Activated naive CD4-positive, alpha-beta T cell treated with anti-CD3 and anti-CD28 coated beads for 36 hours (primary cell): ENCODE measurements at regions of chr3 and their contacts with region 1.

Region 1: DNA sequence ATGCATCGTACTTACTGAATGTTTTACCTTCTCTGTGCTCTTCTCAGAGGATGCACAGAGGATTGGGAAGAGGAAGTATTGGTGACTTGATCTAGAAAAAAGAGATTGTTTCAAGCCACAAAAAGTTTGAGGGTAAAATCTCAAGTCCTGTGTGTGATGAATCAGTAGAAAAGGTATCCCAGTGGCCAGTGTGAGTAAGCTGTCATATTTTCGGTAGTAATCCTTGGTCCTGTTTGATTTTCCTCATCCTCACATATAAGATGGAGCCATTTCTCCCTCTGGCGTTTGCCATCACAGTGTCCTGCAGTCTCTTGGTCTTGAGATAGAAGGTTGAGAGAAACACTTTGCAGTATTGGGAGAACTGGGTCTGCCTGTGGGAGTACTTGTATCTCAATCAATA is 166.8 kb downstream of the LPP start:
- DNase-seq: no peak
- H3K4me3 Mint-ChIP-seq: no peak overlapping the region
- H3K27ac Mint-ChIP-seq: no peak overlapping the region
- H3K4me1 Mint-ChIP-seq: peaks cover 49% of the 10 kb centered on the region
- H3K27me3 Mint-ChIP-seq: no peaks in the 10 kb centered on the region

Region 2: DNA sequence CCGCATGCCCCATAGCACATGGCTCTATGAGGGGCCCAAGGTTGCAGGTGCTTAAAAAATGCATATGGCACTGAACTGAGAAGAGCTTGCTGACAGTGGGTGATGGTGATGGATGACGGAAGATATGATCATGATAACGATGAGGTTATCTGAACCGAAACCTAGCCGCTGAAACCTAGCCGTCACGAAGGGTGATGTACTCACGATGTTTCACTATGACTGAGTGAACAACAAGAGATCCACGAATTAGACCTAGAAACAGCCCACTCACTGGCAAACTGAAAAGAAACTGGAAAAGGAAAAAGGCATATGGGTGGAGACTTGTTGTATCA is 517.9 kb before region 1 on chr3:
- CTCF ChIA-PET with region 1: no interaction called
- intact Hi-C with region 1: loop called (anchors 5 kb)
- DNase-seq: peak; percentile 89
- H3K4me3 Mint-ChIP-seq: peak overlapping the region; percentile 1
- H3K27ac Mint-ChIP-seq: peak overlapping the region; percentile 79
- H3K4me1 Mint-ChIP-seq: peaks cover 95% of the 10 kb centered on the region
- H3K27me3 Mint-ChIP-seq: no peaks in the 10 kb centered on the region

Region 3: DNA sequence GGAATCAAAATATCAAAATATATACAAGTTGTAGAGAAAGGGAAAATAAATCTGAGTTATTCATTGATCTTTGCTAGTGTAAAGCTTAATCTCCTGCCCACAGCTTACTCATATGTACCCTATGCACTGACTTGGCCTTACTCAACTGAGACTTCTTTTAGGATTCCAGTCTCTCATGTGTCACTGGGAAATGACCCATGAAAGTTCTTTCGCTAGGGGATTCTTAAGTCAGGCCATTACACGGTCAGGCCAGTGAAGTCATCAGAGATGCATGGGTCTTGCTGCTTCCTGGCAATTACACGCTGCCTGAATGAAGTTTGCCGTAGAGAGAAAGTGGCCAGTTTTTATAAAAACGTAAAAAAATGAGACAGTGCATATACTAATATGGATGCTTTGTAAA is 187.5 kb before region 1 on chr3:
- CTCF ChIA-PET with region 1: no interaction called
- intact Hi-C with region 1: no loop called
- DNase-seq: no peak
- H3K4me3 Mint-ChIP-seq: no peak overlapping the region
- H3K27ac Mint-ChIP-seq: no peak overlapping the region
- H3K4me1 Mint-ChIP-seq: peaks cover 11% of the 10 kb centered on the region
- H3K27me3 Mint-ChIP-seq: no peaks in the 10 kb centered on the region

Region 4: DNA sequence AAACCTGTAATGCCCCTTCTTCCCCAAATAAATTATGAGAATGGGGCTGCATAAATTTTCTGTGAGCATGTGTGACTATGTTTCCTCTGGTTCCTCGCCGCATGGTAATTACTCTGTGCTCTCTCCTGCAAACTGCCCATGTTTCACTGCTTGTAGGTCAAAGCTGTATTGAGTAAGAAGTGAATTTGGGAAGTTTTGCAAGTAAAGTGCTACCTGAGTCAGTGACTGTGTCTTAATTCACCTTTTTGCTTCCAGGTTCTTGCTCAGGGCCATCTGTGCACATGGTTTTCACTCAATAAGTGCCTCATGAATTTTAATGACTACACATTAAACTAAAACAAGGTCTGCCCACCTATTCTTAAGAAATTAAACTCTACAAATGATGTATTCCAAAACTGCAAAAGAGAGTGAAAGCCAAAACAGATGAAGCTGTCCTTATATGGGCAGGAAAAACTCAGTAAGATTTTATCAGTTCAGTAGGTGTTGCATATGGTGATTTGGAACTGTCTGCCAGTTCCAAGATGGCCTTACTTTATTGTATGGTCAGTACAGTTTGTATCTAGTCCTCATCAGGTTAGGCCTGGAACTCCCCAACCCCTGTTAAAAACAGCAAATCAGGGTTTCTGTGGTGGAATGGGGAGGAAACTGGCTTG is 66.8 kb before region 1 on chr3:
- CTCF ChIA-PET with region 1: no interaction called
- intact Hi-C with region 1: loop called (anchors 2 kb)
- DNase-seq: peak; percentile 54
- H3K4me3 Mint-ChIP-seq: no peak overlapping the region
- H3K27ac Mint-ChIP-seq: peak overlapping the region; percentile 76
- H3K4me1 Mint-ChIP-seq: peaks cover 44% of the 10 kb centered on the region
- H3K27me3 Mint-ChIP-seq: no peaks in the 10 kb centered on the region

Region 5: DNA sequence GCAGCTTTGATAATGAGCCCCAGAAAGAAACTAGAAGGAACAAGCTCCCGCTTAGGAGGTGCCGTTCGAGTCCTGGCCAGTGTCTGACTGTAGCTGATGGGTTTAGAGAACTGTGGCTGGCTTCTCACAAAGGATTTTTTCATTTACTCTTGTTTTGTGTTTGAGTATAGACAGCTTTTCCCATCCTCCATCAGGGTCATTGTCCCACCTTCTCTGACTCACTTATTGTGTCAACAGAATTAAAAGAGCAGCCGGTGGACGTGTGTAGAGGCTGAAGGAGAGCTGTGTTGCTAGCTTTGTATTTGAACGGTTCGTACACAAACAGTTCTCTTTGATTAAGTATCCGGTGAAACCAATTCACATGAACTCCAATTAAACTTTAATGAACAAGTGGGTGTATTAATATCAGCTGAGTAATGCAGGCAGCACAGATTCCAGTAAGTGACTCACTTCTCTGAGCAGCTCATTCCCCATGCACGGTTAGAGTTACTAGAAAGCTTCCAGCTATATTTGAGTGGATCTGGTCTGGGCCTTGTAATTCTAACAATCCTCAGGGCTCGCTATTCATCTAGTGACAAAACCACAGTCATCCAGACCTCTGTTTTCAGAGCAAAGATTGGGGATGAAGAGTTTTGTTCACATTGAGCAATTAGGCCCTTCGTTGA is 25.8 kb before region 1 on chr3:
- CTCF ChIA-PET with region 1: interaction called, 4 read pairs
- intact Hi-C with region 1: loop called (anchors 1 kb)
- DNase-seq: peak; percentile 49
- H3K4me3 Mint-ChIP-seq: no peak overlapping the region
- H3K27ac Mint-ChIP-seq: peak overlapping the region; percentile 69
- H3K4me1 Mint-ChIP-seq: peaks cover 85% of the 10 kb centered on the region
- H3K27me3 Mint-ChIP-seq: no peaks in the 10 kb centered on the region

Region 6: DNA sequence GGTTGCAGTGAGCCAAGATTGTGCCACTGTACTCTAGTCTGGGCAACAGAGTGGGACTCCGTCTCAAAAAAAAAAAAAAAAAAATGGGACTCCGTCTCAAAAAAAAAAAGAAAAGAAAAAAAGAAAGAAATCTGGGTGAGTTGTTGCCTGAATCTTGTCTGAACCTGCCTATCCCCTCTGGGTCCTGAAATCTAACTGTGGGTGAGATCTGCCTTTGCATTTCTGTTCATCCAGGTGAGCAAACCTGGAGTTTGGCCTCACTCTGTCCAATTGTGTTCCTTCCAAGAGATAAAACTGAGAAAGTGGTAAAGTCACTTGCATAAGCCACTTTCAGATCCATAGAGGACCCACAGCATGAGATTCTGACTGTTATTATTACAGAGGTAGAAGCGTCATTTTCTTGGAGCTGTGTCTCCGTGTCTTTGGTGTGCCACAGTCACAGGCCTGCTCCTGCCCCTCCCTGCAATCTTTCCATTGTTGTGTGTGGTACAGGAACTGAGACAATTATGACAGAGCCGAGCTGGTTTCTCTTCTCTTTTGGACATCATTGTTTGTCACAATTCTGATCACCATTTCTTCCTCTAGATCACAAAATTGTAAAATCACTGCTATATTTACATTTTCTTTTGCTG is 69.1 kb after region 1 on chr3:
- CTCF ChIA-PET with region 1: no interaction called
- intact Hi-C with region 1: loop called (anchors 1 kb)
- DNase-seq: peak; percentile 85
- H3K4me3 Mint-ChIP-seq: no peak overlapping the region
- H3K27ac Mint-ChIP-seq: peak overlapping the region; percentile 67
- H3K4me1 Mint-ChIP-seq: peaks cover 39% of the 10 kb centered on the region
- H3K27me3 Mint-ChIP-seq: no peaks in the 10 kb centered on the region

Region 7: DNA sequence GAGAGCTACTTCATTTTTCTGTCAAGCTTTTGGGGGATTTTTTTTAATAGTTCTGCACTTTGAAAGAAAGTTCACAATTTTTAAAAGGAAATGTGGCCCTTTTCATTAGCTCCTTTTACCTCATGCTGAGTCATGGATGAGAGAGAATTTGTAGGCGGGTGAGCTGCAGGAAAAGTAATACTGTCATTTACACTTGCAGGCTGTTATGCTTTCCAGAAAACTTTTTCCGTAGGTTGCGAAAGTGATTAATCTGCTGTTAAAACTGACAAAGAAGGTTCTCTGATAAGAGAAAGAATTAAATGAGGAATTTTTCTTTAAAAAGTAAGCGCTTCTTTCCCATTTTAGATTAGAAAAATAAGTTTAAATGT is 263.4 kb after region 1 on chr3:
- CTCF ChIA-PET with region 1: no interaction called
- intact Hi-C with region 1: loop called (anchors 5 kb)
- DNase-seq: peak; percentile 61
- H3K4me3 Mint-ChIP-seq: no peak overlapping the region
- H3K27ac Mint-ChIP-seq: no peak overlapping the region
- H3K4me1 Mint-ChIP-seq: peaks cover 15% of the 10 kb centered on the region
- H3K27me3 Mint-ChIP-seq: no peaks in the 10 kb centered on the region